B cell (primary cell): ENCODE measurements at regions of chr21 and their contacts with region 1.

Region 1: DNA sequence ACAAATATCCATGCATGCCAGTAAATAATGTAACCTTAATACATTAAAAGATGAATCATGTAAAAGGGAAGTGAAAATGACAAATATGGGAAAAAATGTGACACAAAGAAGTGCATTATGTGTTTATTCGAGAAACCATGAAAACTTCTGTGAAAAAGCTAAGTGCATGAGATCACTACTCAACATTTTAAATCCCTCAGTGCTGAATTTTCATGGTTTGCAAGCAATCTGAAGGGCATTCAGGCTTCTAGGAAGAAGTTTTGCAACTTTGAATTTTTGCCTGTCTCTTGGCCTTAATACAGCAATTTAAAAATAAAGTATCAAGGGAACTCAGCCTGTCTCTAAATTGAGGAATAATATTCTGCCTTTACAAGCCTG is 78.2 kb downstream of the MAP3K7CL start:
- DNase-seq: peak; percentile 40
- ATAC-seq: peak; percentile 28
- H3K4me3 ChIP-seq: peak overlapping the region in 1 of 5 experiments; percentile 41
- H3K4me3 Mint-ChIP-seq: peak overlapping the region; percentile 62
- H3K27ac ChIP-seq: peak overlapping the region; percentile 30 to 44
- H3K27ac Mint-ChIP-seq: peak overlapping the region; percentile 80
- H3K4me1 ChIP-seq: peaks cover 14 to 15% of the 10 kb centered on the region in 2 donors
- H3K4me1 Mint-ChIP-seq: peaks cover 17% of the 10 kb centered on the region
- H3K27me3 ChIP-seq: no peaks in the 10 kb centered on the region
- H3K27me3 Mint-ChIP-seq: no peaks in the 10 kb centered on the region
- CTCF ChIP-seq: no peak

Region 2: DNA sequence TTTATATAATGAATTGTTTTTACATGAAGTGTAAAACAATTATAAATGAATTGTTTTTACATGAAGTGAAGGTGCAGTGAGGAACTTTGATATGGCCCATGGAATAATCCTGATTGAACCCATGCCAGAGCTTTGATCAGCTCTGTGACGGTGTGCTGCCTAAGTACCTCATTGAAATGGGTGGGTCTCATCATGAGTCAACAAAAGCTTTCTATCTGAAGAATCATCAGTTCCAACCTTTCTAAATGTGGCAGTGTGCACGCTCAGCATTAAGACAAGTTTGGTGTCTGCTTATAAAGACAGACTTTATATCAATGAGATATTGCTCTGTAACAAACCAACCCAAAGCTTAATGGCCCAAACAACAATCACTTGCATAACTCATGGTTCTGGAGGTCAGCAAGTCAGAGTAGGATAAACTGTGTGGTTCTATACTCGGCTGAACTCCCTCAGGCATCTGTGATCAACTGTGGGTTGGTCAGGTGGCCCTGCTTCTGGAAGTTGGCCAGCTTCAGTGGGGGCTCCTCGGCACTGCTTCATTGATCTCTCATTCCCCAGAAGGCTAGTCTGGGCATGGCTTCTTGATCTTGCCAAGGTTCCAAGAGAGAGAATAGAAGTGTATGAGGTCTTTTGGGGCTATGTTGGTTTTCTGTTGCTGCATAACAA is 474.0 kb before region 1 on chr21:
- CTCF ChIA-PET with region 1: no interaction called
- POLR2A ChIA-PET with region 1: no interaction called
- intact Hi-C with region 1: no loop called
- DNase-seq: no peak
- ATAC-seq: no peak
- H3K4me3 ChIP-seq: no peak overlapping the region
- H3K4me3 Mint-ChIP-seq: no peak overlapping the region
- H3K27ac ChIP-seq: no peak overlapping the region
- H3K27ac Mint-ChIP-seq: no peak overlapping the region
- H3K4me1 ChIP-seq: no peaks in the 10 kb centered on the region
- H3K4me1 Mint-ChIP-seq: no peaks in the 10 kb centered on the region
- H3K27me3 ChIP-seq: no peaks in the 10 kb centered on the region
- H3K27me3 Mint-ChIP-seq: no peaks in the 10 kb centered on the region
- CTCF ChIP-seq: no peak

Region 3: GRCh38 chr21:29224006-29224405 is 15.3 kb after region 1 on chr21:
- CTCF ChIA-PET with region 1: no interaction called
- POLR2A ChIA-PET with region 1: no interaction called
- intact Hi-C with region 1: loop called (anchors 2 kb)
- DNase-seq: no peak
- ATAC-seq: no peak
- H3K4me3 ChIP-seq: no peak overlapping the region
- H3K4me3 Mint-ChIP-seq: no peak overlapping the region
- H3K27ac ChIP-seq: no peak overlapping the region
- H3K27ac Mint-ChIP-seq: no peak overlapping the region
- H3K4me1 ChIP-seq: peaks cover 4 to 8% of the 10 kb centered on the region in 2 donors
- H3K4me1 Mint-ChIP-seq: peaks cover 9% of the 10 kb centered on the region
- H3K27me3 ChIP-seq: no peaks in the 10 kb centered on the region
- H3K27me3 Mint-ChIP-seq: no peaks in the 10 kb centered on the region
- CTCF ChIP-seq: no peak